ENCODE measurements at regions of chr3 and their contacts with region 1.

Region 1: GRCh38 chr3:149120051-149120972 is 9.1 kb upstream of the HPS3 start:
- DNase-seq: no peak
- H3K4me3 ChIP-seq: no peak overlapping the region
- H3K27ac ChIP-seq: no peak overlapping the region
- H3K4me1 ChIP-seq: no peaks in the 10 kb centered on the region
- H3K27me3 ChIP-seq: no peaks in the 10 kb centered on the region
- CTCF ChIP-seq: peak in 2 of 3 experiments; percentile 49 to 60; a peak in 2 of 4 replicates
- EP300 ChIP-seq: no peak
- POLR2A ChIP-seq: no peak
- RAD21 ChIP-seq: peak; percentile 85 to 86

Region 2: GRCh38 chr3:149152420-149152819 is 32.1 kb after region 1 on chr3:
- CTCF ChIA-PET with region 1: interaction called, 13 read pairs
- POLR2A ChIA-PET with region 1: no interaction called
- DNase-seq: no peak
- H3K4me3 ChIP-seq: no peak overlapping the region
- H3K27ac ChIP-seq: peak overlapping the region; percentile 24; the same call in 1 of the 2 replicates
- H3K4me1 ChIP-seq: no peaks in the 10 kb centered on the region; a peak in 1 of 7 replicates
- H3K27me3 ChIP-seq: no peaks in the 10 kb centered on the region
- CTCF ChIP-seq: no peak
- EP300 ChIP-seq: no peak
- POLR2A ChIP-seq: no peak
- RAD21 ChIP-seq: no peak

Region 3: GRCh38 chr3:149273096-149273751 is 152.9 kb after region 1 on chr3:
- CTCF ChIA-PET with region 1: interaction called, 50 read pairs
- POLR2A ChIA-PET with region 1: no interaction called
- DNase-seq: peak in 1 of 2 experiments; percentile 56
- H3K4me3 ChIP-seq: no peak overlapping the region
- H3K27ac ChIP-seq: no peak overlapping the region
- H3K4me1 ChIP-seq: no peaks in the 10 kb centered on the region; a peak in 1 of 7 replicates
- H3K27me3 ChIP-seq: no peaks in the 10 kb centered on the region
- CTCF ChIP-seq: peak in 2 of 3 experiments; percentile 99 to 100; a peak in 3 of 4 replicates
- EP300 ChIP-seq: no peak
- POLR2A ChIP-seq: no peak
- RAD21 ChIP-seq: peak; percentile 100

Region 4: GRCh38 chr3:149291178-149291577 is 170.9 kb after region 1 on chr3:
- CTCF ChIA-PET with region 1: interaction called, 26 read pairs
- POLR2A ChIA-PET with region 1: no interaction called
- DNase-seq: no peak
- H3K4me3 ChIP-seq: no peak overlapping the region
- H3K27ac ChIP-seq: no peak overlapping the region
- H3K4me1 ChIP-seq: no peaks in the 10 kb centered on the region
- H3K27me3 ChIP-seq: no peaks in the 10 kb centered on the region
- CTCF ChIP-seq: peak; percentile 47 to 74 (median 57)
- EP300 ChIP-seq: no peak
- POLR2A ChIP-seq: no peak
- RAD21 ChIP-seq: peak; percentile 47 to 56

Region 5: DNA sequence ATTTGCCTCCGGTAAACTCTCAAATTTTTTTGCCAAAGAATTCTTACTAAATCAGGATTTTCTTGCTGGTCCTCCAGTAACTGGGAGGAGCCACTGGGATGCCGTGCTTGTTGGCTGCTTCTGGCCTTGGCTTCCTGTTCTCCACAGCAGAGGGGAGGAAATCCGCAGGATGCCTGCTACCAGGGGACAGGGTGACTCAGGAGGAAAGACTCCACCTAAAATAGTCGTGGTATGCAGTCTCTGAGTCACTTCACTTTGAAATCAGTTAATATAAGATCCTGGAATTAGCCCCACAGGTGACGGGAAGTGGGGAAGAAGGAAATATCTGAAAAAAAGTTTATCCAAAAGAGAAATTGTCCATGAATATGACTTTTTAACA is 219.6 kb after region 1 on chr3:
- CTCF ChIA-PET with region 1: interaction called, 11 read pairs
- POLR2A ChIA-PET with region 1: no interaction called
- DNase-seq: peak in 1 of 2 experiments; percentile 58
- H3K4me3 ChIP-seq: no peak overlapping the region
- H3K27ac ChIP-seq: no peak overlapping the region
- H3K4me1 ChIP-seq: peaks cover 0 to 3% (median 2%) of the 10 kb centered on the region in 4 experiments; a peak in 4 of 7 replicates
- H3K27me3 ChIP-seq: no peaks in the 10 kb centered on the region
- CTCF ChIP-seq: no peak
- EP300 ChIP-seq: no peak
- POLR2A ChIP-seq: no peak
- RAD21 ChIP-seq: no peak

Region 6: DNA sequence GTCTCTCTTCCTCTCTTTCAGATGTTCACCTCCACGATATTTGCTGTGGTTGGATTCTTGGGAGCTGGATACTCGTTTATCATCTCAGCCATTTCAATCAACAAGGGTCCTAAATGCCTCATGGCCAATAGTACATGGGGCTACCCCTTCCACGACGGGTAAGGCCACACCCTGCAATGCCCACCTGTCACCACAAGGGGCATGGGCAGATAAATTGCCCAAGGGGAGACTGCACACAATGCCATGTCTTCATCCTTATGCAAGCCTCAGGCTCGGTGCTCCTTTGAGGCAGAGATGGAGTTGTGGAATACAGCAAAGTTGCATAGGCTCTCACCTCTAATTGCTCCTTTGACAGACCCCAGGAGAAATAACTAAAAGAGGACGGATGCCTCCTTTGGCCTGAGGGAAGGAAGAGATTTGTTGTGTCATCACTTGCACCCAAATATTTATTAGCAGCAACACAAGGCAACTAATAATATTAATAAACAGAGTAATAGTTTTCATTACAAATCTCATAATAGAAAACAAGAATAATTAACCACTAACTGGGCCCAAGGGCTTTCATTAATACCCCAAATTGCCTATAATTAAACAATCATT is 367.4 kb after region 1 on chr3:
- CTCF ChIA-PET with region 1: interaction called, 13 read pairs
- POLR2A ChIA-PET with region 1: no interaction called
- DNase-seq: peak in 1 of 2 experiments; percentile 85
- H3K4me3 ChIP-seq: no peak overlapping the region
- H3K27ac ChIP-seq: no peak overlapping the region
- H3K4me1 ChIP-seq: no peaks in the 10 kb centered on the region
- H3K27me3 ChIP-seq: no peaks in the 10 kb centered on the region
- CTCF ChIP-seq: peak; percentile 71 to 95 (median 92)
- EP300 ChIP-seq: no peak
- POLR2A ChIP-seq: no peak
- RAD21 ChIP-seq: peak; percentile 41 to 59

Measured in H1 (cell line).